ENCODE measurements at regions of chr9 and their contacts with region 1.

Region 1: DNA sequence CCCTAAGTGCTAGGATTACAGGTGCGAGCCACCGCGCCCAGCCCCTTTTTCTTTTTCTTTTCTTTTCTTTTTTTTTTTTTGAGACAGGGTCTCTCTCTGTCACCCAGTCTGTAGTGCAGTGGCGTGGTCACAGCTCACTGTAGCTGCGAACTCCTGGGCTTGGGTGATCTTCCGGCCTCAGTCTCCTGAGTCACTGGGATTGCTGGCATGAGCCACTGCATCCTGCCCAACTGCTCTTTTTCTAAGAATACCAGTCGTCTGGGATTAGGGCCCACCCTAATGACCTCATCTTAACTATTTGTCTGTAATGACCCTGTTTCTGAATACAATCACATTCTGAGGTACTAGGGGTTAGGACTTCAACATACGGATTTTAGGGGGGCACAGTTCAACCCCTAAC is 34.1 kb upstream of the NANS start:
- DNase-seq: no peak

Region 2: GRCh38 chr9:97774673-97775072 is 247.8 kb before region 1 on chr9:
- intact Hi-C with region 1: loop called in 1 of 2 experiments (anchors 5 kb)
- DNase-seq: no peak

Region 3: GRCh38 chr9:97906236-97906831 is 116.1 kb before region 1 on chr9:
- intact Hi-C with region 1: no loop called
- DNase-seq: peak; percentile 83

Measured in posterior vena cava (tissue), 2 donors.